ENCODE measurements at regions of chr12 and their contacts with region 1.

Region 1: GRCh38 chr12:39619660-39620433 is at the start of gene ABCD2:
- DNase-seq: peak; percentile 41 to 87 (median 83)
- ATAC-seq: peak; percentile 88
- H3K4me3 ChIP-seq: peak within 1 kb of the TSS; percentile 70
- H3K4me3 Mint-ChIP-seq: no peak within 1 kb of the TSS
- H3K27ac ChIP-seq: peak within 1 kb of the TSS; percentile 91
- H3K27ac Mint-ChIP-seq: no peak within 1 kb of the TSS
- H3K4me1 ChIP-seq: peaks cover 27 to 32% of the 10 kb centered on the region in 2 donors
- H3K4me1 Mint-ChIP-seq: peaks cover 16 to 57% (median 42%) of the 10 kb centered on the region in 7 donors
- H3K27me3 ChIP-seq: no peaks in the 10 kb centered on the region
- H3K27me3 Mint-ChIP-seq: no peaks in the 10 kb centered on the region
- total RNA-seq, gene ABCD2: 7.7 to 32.9 (median 21.0) TPM

Region 2: DNA sequence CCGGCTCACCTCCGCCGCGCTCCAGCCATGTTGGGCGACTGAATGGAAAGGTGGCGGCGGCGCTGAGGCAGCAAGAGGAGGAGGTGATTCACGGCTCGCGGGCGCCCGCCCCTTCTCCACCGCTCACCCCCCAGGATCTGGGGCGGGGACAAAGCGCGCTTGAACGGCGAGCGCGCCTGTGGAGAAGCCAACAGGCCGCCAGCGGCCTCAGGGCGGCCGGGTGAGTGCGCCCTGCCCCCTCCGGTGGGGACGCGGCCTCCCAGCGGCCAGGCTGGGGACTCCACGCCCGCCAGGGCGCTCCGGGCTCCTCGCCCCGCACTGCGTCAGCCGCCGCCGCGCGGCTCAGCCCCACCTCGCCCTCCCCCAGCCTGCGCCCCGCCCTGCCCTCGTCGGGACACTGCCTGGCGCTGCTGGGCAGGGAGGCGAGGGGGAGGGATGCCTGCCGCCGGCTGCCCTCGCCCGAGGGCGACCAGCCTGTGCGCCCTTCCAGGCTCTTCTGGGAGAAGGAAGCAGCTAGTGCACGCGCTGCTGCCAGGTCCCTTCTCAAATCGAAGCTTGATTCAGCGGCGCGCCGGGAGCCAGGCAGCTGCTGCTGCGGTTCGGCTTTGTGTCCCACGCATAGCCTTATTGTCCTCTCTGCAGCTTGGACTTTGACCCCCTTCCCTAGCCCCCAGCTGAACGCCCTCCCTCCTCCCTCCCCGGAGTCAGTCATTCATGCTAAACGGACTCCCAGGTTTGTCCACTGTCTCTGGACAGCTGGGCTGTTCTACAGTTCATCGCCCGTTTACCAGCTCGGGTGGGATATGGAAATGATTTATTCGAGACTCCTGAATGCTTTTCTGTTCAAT is 176.5 kb before region 1 on chr12 and contains the start of gene KIF21A:
- CTCF ChIA-PET with region 1: interaction called, 3 read pairs
- POLR2A ChIA-PET with region 1: no interaction called
- intact Hi-C with region 1: loop called (anchors 1 kb)
- DNase-seq: peak; percentile 71 to 91 (median 82)
- ATAC-seq: peak; percentile 93
- H3K4me3 ChIP-seq: peak within 1 kb of the TSS; percentile 75
- H3K4me3 Mint-ChIP-seq: peak within 1 kb of the TSS; percentile 86 to 98 (median 92)
- H3K27ac ChIP-seq: peak within 1 kb of the TSS; percentile 66
- H3K27ac Mint-ChIP-seq: peak within 1 kb of the TSS; percentile 79 to 97 (median 89)
- H3K4me1 ChIP-seq: peaks cover 9 to 10% of the 10 kb centered on the region in 2 donors
- H3K4me1 Mint-ChIP-seq: peaks cover 10 to 28% (median 13%) of the 10 kb centered on the region in 7 donors
- H3K27me3 ChIP-seq: no peaks in the 10 kb centered on the region
- H3K27me3 Mint-ChIP-seq: peaks cover 0 to 32% (median 4%) of the 10 kb centered on the region in 5 donors
- total RNA-seq, gene KIF21A: 5.0 to 12.0 (median 9.3) TPM

Region 3: DNA sequence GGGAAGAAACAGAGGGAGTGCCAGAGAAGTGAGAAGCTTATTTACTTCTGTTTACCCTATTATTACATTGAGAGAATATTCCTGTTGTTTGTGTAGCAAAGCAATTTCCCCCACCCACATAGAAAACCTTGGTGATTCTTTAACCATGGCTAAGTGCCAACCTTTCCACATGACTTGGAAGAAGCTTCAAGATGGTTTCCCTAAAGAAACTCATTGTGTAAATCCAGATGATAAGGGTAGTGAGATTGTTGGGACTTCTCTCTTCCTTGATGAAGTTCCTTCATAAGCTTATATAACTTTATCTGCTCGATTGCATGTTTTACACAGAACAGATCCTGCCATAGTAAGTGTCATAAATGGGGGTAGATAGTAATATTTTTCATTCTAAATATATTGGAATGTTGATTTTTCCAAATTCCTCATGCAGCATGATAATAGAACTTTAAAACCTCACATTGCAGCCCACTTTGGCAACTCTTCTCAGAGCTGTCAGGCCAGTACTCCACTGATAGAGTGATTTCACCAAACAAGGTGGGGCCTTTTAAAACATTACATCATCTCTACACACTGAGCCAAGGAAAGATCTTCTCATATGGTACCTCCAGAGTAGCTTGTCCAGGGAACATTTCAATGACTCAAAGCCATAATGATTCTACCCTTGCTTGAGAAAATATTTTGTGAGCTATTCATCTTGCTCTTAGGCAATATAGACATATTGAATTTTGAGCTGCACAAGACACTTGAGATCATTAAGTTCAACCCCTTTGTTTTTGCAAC is 129.2 kb before region 1 on chr12:
- CTCF ChIA-PET with region 1: no interaction called
- POLR2A ChIA-PET with region 1: no interaction called
- intact Hi-C with region 1: no loop called
- DNase-seq: no peak
- ATAC-seq: no peak
- H3K4me3 ChIP-seq: no peak overlapping the region
- H3K4me3 Mint-ChIP-seq: no peak overlapping the region
- H3K27ac ChIP-seq: no peak overlapping the region
- H3K27ac Mint-ChIP-seq: no peak overlapping the region
- H3K4me1 ChIP-seq: no peaks in the 10 kb centered on the region
- H3K4me1 Mint-ChIP-seq: peaks cover 0 to 5% (median 0%) of the 10 kb centered on the region in 7 donors
- H3K27me3 ChIP-seq: no peaks in the 10 kb centered on the region
- H3K27me3 Mint-ChIP-seq: no peaks in the 10 kb centered on the region

Region 4: GRCh38 chr12:39592295-39592694 is 27.6 kb before region 1 on chr12:
- CTCF ChIA-PET with region 1: interaction called, 10 read pairs
- POLR2A ChIA-PET with region 1: interaction called, 6 read pairs
- intact Hi-C with region 1: loop called (anchors 1 to 2 kb)
- DNase-seq: no peak
- ATAC-seq: no peak
- H3K4me3 ChIP-seq: no peak overlapping the region
- H3K4me3 Mint-ChIP-seq: no peak overlapping the region
- H3K27ac ChIP-seq: no peak overlapping the region
- H3K27ac Mint-ChIP-seq: peak overlapping the region in 6 of 9 donors; percentile 3 to 36 (median 23)
- H3K4me1 ChIP-seq: no peaks in the 10 kb centered on the region
- H3K4me1 Mint-ChIP-seq: peaks cover under 1 to 29% (median 10%) of the 10 kb centered on the region in 7 donors
- H3K27me3 ChIP-seq: no peaks in the 10 kb centered on the region
- H3K27me3 Mint-ChIP-seq: no peaks in the 10 kb centered on the region

Region 5: DNA sequence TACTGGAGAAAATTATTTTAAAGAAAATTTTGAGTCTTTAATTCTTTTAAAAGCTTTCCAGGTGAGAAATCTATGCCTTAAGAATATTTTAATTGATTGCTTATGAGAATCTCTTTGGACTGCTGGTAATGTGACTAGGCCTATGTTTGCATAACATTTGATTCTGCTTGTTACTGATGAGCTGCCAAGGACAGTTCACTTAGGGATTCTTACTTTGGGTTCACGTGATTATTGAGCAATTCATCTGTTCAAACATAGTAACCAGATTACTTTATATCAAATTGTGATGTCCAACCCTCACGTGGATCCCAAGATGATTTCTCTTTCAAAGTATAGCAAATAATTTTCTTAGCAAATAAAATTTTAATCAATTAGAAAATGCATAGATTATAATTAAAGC is 27.1 kb after region 1 on chr12:
- CTCF ChIA-PET with region 1: no interaction called
- POLR2A ChIA-PET with region 1: interaction called, 6 read pairs
- intact Hi-C with region 1: loop called in 1 of 2 experiments (anchors 5 kb)
- DNase-seq: no peak
- ATAC-seq: no peak
- H3K4me3 ChIP-seq: no peak overlapping the region
- H3K4me3 Mint-ChIP-seq: no peak overlapping the region
- H3K27ac ChIP-seq: no peak overlapping the region
- H3K27ac Mint-ChIP-seq: no peak overlapping the region
- H3K4me1 ChIP-seq: no peaks in the 10 kb centered on the region
- H3K4me1 Mint-ChIP-seq: peaks cover 0 to 24% (median 14%) of the 10 kb centered on the region in 7 donors
- H3K27me3 ChIP-seq: no peaks in the 10 kb centered on the region
- H3K27me3 Mint-ChIP-seq: peaks cover 0 to 2% (median 0%) of the 10 kb centered on the region in 5 donors

Region 6: DNA sequence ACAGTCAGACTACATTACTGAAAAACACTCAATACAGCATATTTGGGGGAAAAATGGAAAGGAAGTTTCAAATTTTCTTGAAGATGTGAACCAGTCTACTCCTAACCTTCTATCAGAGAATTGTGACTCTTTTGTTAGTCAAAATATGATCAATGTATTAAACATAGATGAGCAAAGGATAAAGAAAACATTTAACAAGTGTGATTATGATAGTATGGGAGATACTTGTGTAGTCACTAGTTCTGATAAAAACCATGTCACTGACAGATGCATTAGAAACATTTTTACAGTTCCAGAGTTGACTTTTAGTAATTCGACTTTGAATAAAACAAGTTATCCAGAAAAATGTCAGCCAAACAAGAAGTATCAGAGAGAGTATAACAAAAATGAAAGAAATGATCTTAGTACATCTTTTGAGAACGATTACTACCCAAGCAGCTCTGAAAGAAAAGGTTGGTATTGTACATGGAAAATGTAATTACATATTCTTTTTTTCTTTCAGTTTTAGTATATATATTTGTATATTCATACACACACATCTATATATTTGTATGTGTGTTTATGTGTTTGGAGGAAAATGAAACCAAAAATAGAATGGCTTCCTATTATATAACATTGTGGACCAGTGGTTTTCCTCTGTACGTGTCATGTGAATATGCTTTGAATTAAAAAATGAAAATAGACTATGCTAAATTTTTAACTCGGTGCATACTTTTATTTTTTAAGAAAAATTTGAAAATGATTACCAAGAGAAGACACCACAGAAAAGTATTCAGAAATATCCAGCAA is 63.0 kb after region 1 on chr12:
- CTCF ChIA-PET with region 1: no interaction called
- POLR2A ChIA-PET with region 1: interaction called, 51 read pairs
- intact Hi-C with region 1: loop called (anchors 1 kb)
- DNase-seq: peak in 6 of 9 donors; percentile 27 to 60 (median 44)
- ATAC-seq: peak; percentile 75
- H3K4me3 ChIP-seq: peak overlapping the region; percentile 30
- H3K4me3 Mint-ChIP-seq: peak overlapping the region; percentile 61 to 90 (median 83)
- H3K27ac ChIP-seq: peak overlapping the region; percentile 64
- H3K27ac Mint-ChIP-seq: peak overlapping the region; percentile 87 to 99 (median 96)
- H3K4me1 ChIP-seq: peaks cover 24 to 26% of the 10 kb centered on the region in 2 donors
- H3K4me1 Mint-ChIP-seq: peaks cover 16 to 45% (median 38%) of the 10 kb centered on the region in 7 donors
- H3K27me3 ChIP-seq: no peaks in the 10 kb centered on the region
- H3K27me3 Mint-ChIP-seq: no peaks in the 10 kb centered on the region